Endothelial cell of umbilical vein (primary cell): ENCODE measurements at regions of chr11 and their contacts with region 1.

Region 1: GRCh38 chr11:86456052-86456939 is 81.6 kb downstream of the CCDC81 start:
- DNase-seq: peak; percentile 87
- H3K4me3 ChIP-seq: no peak overlapping the region
- H3K27ac ChIP-seq: peak overlapping the region; percentile 72
- H3K4me1 ChIP-seq: peaks cover 53% of the 10 kb centered on the region
- H3K27me3 ChIP-seq: no peaks in the 10 kb centered on the region
- CTCF ChIP-seq: peak; percentile 80 to 86
- POLR2A ChIP-seq: no peak

Region 2: GRCh38 chr11:86511086-86511551 is 54.8 kb after region 1 on chr11:
- CTCF ChIA-PET with region 1: interaction called, 7 read pairs
- POLR2A ChIA-PET with region 1: no interaction called
- dilution Hi-C with region 1: no loop called
- intact Hi-C with region 1: loop called (anchors 1 kb)
- DNase-seq: peak; percentile 61
- H3K4me3 ChIP-seq: no peak overlapping the region
- H3K27ac ChIP-seq: no peak overlapping the region
- H3K4me1 ChIP-seq: peaks cover 31% of the 10 kb centered on the region
- H3K27me3 ChIP-seq: no peaks in the 10 kb centered on the region
- CTCF ChIP-seq: no peak
- POLR2A ChIP-seq: no peak

Region 3: GRCh38 chr11:86577663-86578636 is 121.7 kb after region 1 on chr11:
- CTCF ChIA-PET with region 1: interaction called, 4 read pairs
- POLR2A ChIA-PET with region 1: no interaction called
- dilution Hi-C with region 1: no loop called
- intact Hi-C with region 1: loop called (anchors 1 kb)
- DNase-seq: peak; percentile 98
- H3K4me3 ChIP-seq: no peak overlapping the region
- H3K27ac ChIP-seq: peak overlapping the region; percentile 63
- H3K4me1 ChIP-seq: peaks cover 59% of the 10 kb centered on the region
- H3K27me3 ChIP-seq: no peaks in the 10 kb centered on the region
- CTCF ChIP-seq: no peak
- POLR2A ChIP-seq: no peak

Region 4: DNA sequence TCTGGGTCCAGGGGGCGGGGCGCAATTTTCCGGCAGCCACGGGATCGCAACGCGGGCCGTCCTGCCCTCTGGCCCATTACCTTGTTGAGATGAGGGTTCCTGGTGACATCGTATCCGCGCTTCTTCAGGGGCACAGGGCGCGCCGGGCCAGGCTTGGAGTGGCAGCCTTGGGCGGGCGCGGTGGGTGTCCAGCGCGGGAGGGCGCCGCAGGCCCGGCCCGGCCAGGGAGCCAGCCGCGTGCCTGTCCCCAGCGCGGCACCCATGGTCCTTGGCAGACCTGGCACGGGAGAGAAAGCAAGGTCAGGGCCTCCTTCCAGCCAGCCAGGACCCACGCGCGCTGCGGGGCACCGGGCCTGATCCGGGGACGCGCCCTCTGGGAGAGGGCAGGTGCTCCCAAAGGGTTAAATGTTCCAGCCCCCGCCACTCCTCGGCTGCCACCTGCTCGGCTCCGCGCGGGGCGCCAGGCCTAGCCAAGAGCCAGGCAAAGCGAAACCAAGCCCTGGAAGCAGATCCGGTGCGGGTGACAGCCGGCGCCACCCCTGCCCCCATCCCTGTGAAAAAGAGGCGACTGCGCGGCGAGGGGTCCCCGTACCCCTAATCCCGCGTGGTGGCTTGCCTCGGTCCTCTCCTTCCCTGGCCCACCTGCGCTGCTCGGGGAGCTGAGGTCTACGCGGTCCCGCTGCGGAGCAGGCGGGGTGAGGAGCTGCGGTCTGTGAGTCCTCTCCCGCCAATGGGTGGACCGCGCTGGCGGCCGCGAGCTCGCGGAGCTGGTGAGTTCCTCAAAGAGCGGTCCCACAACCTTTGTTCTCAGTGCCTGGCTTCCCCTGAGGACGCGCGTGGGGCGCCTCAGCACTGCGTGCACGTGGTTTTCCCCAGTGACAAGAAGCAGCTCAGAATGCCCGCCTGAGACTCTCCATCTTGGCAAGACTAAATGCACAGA is 215.7 kb after region 1 on chr11 and contains the start of gene ME3:
- CTCF ChIA-PET with region 1: interaction called, 7 read pairs
- POLR2A ChIA-PET with region 1: no interaction called
- dilution Hi-C with region 1: no loop called
- intact Hi-C with region 1: loop called (anchors 1 kb)
- DNase-seq: peak; percentile 80
- H3K4me3 ChIP-seq: peak within 1 kb of the TSS; percentile 60 to 88 (median 85)
- H3K27ac ChIP-seq: peak within 1 kb of the TSS; percentile 91
- H3K4me1 ChIP-seq: peaks cover 31% of the 10 kb centered on the region
- H3K27me3 ChIP-seq: no peaks in the 10 kb centered on the region
- CTCF ChIP-seq: no peak
- POLR2A ChIP-seq: peak; percentile 80
- total RNA-seq, gene ME3: 26.9 and 27.2 TPM in 2 replicates

Region 5: DNA sequence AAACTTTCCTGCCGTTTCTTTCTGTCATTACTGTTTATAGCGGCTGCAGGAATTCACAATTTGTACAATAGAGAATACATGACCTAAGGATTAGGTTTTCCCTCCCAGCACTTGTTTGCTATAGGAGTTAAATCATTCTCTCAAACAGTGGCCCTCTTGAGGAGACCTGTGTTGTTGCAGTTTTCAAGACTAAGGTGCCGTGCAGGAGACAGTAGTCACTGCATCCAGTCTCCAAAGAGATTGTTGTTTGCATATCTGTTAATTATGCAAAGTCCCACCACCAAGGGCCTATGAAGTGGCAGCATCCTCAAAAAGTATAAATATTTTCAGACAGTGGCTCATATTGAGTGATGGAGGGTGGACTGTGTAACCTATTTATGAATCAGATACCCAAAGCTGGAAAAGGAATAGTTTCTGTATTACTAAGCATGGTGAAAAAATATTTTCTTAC is 346.3 kb after region 1 on chr11:
- CTCF ChIA-PET with region 1: interaction called, 8 read pairs
- POLR2A ChIA-PET with region 1: interaction called, 3 read pairs
- dilution Hi-C with region 1: no loop called
- intact Hi-C with region 1: loop called (anchors 1 kb)
- DNase-seq: peak; percentile 80
- H3K4me3 ChIP-seq: peak overlapping the region; percentile 82 to 96 (median 95)
- H3K27ac ChIP-seq: peak overlapping the region; percentile 96
- H3K4me1 ChIP-seq: peaks cover 63% of the 10 kb centered on the region
- H3K27me3 ChIP-seq: no peaks in the 10 kb centered on the region
- CTCF ChIP-seq: peak; percentile 57 to 60
- POLR2A ChIP-seq: no peak

Region 6: DNA sequence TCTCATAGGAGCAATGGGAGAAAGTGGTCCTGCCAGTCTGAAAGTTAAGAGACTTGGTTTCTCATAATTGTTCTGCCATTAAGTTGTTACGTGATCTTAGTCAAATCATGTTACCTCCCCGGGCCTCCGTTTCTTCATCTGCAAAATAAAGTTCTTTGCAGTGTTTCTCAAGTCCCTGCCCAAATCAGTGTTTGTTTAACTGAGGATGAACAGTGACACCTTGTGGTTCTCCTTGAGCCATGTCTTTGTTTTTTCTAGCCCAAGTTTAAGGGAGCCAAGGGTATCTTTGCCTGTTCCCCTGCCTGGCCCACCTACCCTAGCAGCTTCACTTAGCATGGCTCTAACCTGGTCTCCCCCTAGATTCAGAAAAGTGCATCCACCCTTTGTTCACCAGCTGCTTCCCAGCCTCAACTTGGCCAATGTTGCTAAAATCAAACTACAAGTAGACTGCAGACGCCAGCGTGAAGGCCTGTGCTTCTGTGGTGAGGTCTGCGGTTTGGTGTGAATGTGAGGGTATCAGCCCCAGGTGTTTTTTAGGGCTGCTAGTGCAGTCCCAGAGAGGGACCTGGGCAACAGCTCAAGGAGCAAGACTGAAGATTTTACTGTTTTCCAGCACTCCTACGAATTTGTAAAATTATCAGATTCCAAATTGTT is 463.4 kb after region 1 on chr11:
- CTCF ChIA-PET with region 1: interaction called, 9 read pairs
- POLR2A ChIA-PET with region 1: no interaction called
- dilution Hi-C with region 1: no loop called
- intact Hi-C with region 1: loop called (anchors 1 kb)
- DNase-seq: peak; percentile 88
- H3K4me3 ChIP-seq: no peak overlapping the region
- H3K27ac ChIP-seq: peak overlapping the region; percentile 100
- H3K4me1 ChIP-seq: peaks cover 48% of the 10 kb centered on the region
- H3K27me3 ChIP-seq: no peaks in the 10 kb centered on the region
- CTCF ChIP-seq: peak; percentile 60
- POLR2A ChIP-seq: no peak